Psoas muscle (tissue), 8 donors: ENCODE measurements at regions of chr9 and their contacts with region 1.

Region 1: GRCh38 chr9:7536310-7536939 is 263.2 kb downstream of the DMAC1 start:
- DNase-seq: peak in 1 of 2 donors; percentile 15
- ATAC-seq: peak; percentile 57 to 71 (median 62)
- H3K4me3 ChIP-seq: no peak overlapping the region
- H3K27ac ChIP-seq: no peak overlapping the region
- H3K4me1 ChIP-seq: no peaks in the 10 kb centered on the region
- H3K27me3 ChIP-seq: peaks cover 0 to 5% (median 0%) of the 10 kb centered on the region in 3 donors
- CTCF ChIP-seq: peak; percentile 69

Region 2: DNA sequence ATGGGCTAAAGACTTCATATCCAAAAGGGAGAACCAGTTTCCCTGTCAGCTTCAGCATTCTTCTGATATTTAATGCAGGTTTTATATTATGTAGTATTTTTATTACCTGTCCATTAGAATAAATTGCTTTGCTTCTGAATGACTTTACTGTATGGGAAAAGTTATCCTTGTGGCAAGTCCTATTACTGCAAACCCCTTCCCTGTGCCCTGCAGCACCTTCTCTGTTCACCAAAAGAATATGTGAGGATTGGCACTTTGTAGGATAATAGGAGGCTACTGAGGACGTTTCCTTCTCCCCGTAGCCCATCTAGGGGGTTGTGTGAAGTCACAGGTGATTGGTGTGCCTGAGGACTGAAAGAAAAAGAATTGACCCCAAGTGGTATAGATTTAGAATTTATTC is 482.5 kb before region 1 on chr9:
- intact Hi-C with region 1: loop called (anchors 5 kb)
- DNase-seq: no peak
- ATAC-seq: no peak
- H3K4me3 ChIP-seq: no peak overlapping the region
- H3K27ac ChIP-seq: no peak overlapping the region
- H3K4me1 ChIP-seq: peaks cover 5% of the 10 kb centered on the region
- H3K27me3 ChIP-seq: no peaks in the 10 kb centered on the region
- CTCF ChIP-seq: no peak

Region 3: GRCh38 chr9:7273391-7273974 is 262.9 kb before region 1 on chr9:
- intact Hi-C with region 1: loop called in 1 of 2 experiments (anchors 5 kb)
- DNase-seq: no peak
- ATAC-seq: no peak
- H3K4me3 ChIP-seq: no peak overlapping the region
- H3K27ac ChIP-seq: no peak overlapping the region
- H3K4me1 ChIP-seq: no peaks in the 10 kb centered on the region
- H3K27me3 ChIP-seq: no peaks in the 10 kb centered on the region
- CTCF ChIP-seq: peak; percentile 61

Region 4: DNA sequence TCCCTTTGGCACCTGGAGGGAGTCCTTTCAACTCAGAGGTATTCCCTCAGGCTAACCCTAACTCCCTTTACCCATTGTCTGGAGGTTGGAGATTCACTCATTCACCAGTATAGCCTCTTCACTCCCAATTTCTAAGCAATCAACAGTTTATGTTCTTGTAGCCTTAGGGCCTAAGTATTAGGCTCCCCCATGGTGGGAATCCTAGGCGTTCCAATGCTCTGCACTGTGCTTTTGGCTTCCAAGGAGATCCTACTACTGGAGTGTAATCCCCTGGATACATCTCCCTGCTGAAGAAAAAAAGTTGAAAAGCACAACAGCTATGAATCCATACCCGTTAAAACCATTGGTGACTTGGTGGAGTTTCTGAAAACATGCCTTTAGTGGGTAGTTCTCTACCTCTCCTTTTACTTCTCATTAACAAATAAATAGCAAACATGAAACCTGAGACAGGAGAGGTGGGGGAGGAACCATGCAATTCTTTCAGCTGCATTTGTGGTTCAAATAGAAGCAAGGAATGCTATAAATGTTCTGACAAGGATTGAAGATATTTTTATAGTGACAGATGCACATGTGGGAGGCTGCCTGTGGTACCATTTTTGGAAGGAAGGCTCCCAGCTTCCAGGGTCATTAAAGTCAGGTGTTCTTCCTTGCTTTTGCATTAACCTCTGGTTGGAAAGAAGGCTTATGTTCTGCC is 133.9 kb before region 1 on chr9:
- intact Hi-C with region 1: loop called in 1 of 2 experiments (anchors 2 kb)
- DNase-seq: no peak
- ATAC-seq: no peak
- H3K4me3 ChIP-seq: no peak overlapping the region
- H3K27ac ChIP-seq: no peak overlapping the region
- H3K4me1 ChIP-seq: no peaks in the 10 kb centered on the region
- H3K27me3 ChIP-seq: no peaks in the 10 kb centered on the region
- CTCF ChIP-seq: no peak